ENCODE measurements at regions of chrX and their contacts with region 1.

Region 1: GRCh38 chrX:50747471-50747900 is 66.5 kb downstream of the SHROOM4 start:
- DNase-seq: peak in 1 of 2 experiments; percentile 25
- H3K4me3 ChIP-seq: no peak overlapping the region
- H3K4me3 Mint-ChIP-seq: no peak overlapping the region
- H3K27ac Mint-ChIP-seq: no peak overlapping the region
- H3K4me1 ChIP-seq: no peaks in the 10 kb centered on the region
- H3K4me1 Mint-ChIP-seq: no peaks in the 10 kb centered on the region
- H3K27me3 ChIP-seq: no peaks in the 10 kb centered on the region
- H3K27me3 Mint-ChIP-seq: peaks cover 8% of the 10 kb centered on the region
- CTCF ChIP-seq: peak; percentile 55 to 65

Region 2: DNA sequence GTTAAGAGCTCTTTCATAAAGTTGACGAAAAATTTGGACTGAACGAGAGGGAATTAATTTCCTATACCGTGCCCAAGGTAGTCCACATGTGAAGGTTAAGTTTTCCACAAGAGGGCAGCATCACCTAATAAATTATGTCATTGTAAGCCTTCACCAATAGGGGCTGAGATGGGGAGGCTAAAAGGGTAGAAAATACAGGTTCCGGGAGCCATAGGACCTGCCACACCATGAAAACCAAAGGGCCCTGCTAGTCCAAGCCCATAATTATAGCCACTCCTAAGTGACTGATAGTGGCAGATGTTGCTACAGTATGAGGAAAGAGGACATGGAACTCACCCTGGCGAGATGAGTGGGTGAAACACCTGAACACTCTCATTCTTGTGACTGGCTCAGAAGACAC is 55.7 kb before region 1 on chrX:
- CTCF ChIA-PET with region 1: no interaction called
- POLR2A ChIA-PET with region 1: no interaction called
- intact Hi-C with region 1: loop called (anchors 5 kb)
- DNase-seq: peak in 1 of 2 experiments; percentile 53
- H3K4me3 ChIP-seq: no peak overlapping the region
- H3K4me3 Mint-ChIP-seq: no peak overlapping the region
- H3K27ac Mint-ChIP-seq: no peak overlapping the region
- H3K4me1 ChIP-seq: no peaks in the 10 kb centered on the region
- H3K4me1 Mint-ChIP-seq: no peaks in the 10 kb centered on the region
- H3K27me3 ChIP-seq: no peaks in the 10 kb centered on the region
- H3K27me3 Mint-ChIP-seq: peaks cover 2% of the 10 kb centered on the region
- CTCF ChIP-seq: peak; percentile 57 to 63

Region 3: DNA sequence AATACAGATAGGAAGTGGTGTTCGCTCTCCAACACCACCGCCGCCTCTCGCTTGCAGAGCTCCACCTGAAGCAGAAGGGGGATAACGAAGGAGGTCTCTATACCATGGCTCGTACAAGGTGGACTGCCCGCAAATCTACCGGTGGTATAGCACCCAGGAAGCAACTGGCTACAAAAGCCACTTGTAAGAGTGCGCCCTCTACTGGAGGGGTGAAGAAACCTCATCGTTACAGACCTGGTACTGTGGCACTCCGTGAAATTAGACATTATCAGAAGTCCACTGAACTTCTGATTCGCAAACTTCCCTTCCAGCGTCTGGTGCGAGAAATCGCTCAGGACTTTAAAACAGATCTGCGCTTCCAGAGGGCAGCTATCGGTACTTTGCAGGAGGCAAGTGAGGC is 157.8 kb after region 1 on chrX:
- CTCF ChIA-PET with region 1: no interaction called
- POLR2A ChIA-PET with region 1: no interaction called
- intact Hi-C with region 1: loop called (anchors 1 kb)
- DNase-seq: peak in 1 of 2 experiments; percentile 32
- H3K4me3 ChIP-seq: no peak overlapping the region
- H3K4me3 Mint-ChIP-seq: no peak overlapping the region
- H3K27ac Mint-ChIP-seq: no peak overlapping the region
- H3K4me1 ChIP-seq: no peaks in the 10 kb centered on the region
- H3K4me1 Mint-ChIP-seq: no peaks in the 10 kb centered on the region
- H3K27me3 ChIP-seq: no peaks in the 10 kb centered on the region
- H3K27me3 Mint-ChIP-seq: no peaks in the 10 kb centered on the region
- CTCF ChIP-seq: peak in 1 of 2 experiments; percentile 25